ENCODE measurements at regions of chr2 and their contacts with region 1.

Region 1: DNA sequence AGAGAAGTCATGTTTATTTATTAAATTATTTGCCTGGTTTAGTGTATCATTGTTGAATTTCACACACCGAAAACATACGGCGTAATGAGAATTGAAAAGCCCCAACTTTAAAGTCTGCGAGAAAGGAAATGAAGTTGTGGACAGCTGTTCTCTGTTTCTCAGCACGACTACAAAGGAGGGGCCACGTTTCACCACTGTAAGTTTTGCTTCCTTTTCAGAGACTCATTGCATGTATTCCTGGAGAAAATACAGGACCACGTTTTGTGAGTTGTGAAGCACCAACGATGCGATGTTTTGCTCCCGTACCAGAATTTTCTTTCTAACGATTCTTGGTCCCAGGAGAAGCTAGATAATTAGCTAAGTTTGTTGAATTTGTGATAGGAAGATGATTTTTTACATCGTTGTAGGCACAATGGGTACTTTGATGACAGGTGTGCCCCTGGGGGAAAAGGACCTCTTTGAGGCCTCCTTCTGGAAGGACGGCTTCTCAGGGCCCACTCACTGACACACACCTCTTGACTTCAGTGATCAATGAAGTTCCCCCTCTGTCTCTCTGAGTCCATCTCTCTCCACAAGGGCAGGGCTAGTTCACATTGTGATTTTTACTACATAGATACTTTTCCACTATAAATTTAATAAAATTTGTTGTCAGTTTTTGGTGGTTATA is 23.7 kb upstream of the ACKR3 start:
- DNase-seq: peak; percentile 89
- ATAC-seq: peak; percentile 75
- H3K4me3 ChIP-seq: no peak overlapping the region; the same call in 1 of the 2 replicates
- H3K27ac ChIP-seq: peak overlapping the region; percentile 89
- H3K4me1 ChIP-seq: peaks cover 54% of the 10 kb centered on the region
- H3K27me3 ChIP-seq: no peaks in the 10 kb centered on the region
- CTCF ChIP-seq: no peak
- EP300 ChIP-seq: peak in 1 of 2 experiments; percentile 7; a peak in 2 of 4 replicates
- POLR2A ChIP-seq: no peak
- RAD21 ChIP-seq: peak; percentile 13; the same call in 1 of the 2 replicates

Region 2: DNA sequence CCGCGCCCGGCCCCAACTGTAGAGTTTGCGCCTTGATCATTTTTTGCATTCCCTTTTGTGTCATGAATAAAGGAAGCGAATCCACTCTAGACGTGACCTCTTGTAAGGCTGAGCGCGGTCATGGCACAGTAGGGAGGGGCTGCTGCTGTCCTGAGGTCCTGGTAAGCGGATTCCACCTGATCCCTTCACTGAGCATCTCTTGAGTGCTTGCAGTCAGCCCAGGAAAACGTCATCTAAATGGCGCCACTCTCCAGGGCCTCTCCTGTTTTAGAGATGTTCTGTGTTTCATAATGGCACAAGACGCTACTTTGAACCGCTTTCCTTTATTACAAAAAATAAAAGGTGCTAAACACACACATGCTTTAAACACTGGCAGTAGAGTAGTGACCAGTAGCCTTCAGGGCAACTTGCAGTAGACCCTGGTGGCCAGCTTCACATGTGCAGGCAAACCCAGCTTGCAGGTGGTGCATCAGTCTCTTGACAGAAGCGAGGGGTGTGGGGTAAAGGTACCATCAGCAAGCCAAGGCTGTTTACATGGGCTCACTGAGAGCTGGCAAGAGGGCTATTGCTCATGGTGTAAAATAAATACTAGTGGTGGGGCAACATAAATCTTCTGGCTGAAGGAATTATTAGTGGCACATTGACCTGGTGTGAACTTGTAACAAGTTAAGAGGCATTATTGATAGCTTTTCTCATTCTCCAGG is 19.3 kb before region 1 on chr2:
- CTCF ChIA-PET with region 1: interaction called, 10 read pairs
- POLR2A ChIA-PET with region 1: interaction called, 3 read pairs
- RAD21 ChIA-PET with region 1: interaction called, 7 read pairs
- SMC1A ChIA-PET with region 1: interaction called, 27 read pairs
- in situ Hi-C with region 1: no loop called
- intact Hi-C with region 1: no loop called
- DNase-seq: no peak
- ATAC-seq: no peak
- H3K4me3 ChIP-seq: no peak overlapping the region
- H3K27ac ChIP-seq: no peak overlapping the region
- H3K4me1 ChIP-seq: no peaks in the 10 kb centered on the region
- H3K27me3 ChIP-seq: no peaks in the 10 kb centered on the region
- CTCF ChIP-seq: no peak
- EP300 ChIP-seq: no peak
- POLR2A ChIP-seq: no peak
- RAD21 ChIP-seq: no peak

Region 3: DNA sequence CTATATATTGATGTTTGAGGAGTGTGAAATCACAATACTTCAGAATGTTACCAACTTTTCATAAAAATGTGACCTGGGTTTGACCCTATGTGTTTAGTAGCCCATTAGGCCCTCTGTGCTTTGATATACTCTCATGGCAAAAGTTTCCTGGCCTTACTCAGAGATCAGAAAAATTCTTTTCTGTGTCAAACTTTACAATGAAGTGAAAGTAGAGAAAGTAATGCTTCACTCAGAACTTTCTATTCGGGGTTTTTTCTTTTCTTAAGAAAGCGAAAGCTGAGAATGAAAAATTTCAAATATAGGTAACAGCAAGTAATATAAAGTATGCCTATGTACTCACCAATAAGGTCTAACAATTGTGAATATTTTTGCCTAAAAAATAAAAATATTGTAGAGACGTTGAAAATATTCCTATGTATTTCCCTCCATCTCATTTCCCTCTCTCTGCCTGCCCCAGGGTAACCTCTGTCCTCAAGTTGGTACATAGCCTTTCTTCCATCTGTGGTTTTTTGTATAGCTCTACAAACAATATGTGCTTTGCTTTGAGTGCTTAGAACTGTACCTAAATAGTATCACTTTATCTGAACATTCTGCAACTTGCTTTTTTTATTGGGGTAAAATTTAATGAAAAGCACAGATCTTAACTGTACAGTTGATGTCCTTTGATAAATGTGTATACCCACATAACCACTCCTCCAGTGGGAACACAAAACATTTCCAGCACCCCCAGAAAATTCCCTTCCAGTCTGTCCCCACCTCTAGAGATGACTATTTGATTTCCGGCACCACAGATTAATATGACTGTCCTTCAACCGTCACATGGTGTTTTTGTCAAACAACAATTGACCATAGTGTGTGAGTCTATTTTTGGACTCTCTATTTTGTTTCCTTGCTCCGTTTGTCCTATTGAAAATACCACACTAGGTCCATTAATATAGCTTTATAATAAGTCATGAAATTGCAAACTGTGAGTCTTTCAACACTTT is 13.3 kb after region 1 on chr2:
- CTCF ChIA-PET with region 1: interaction called, 5 read pairs
- POLR2A ChIA-PET with region 1: interaction called, 17 read pairs
- RAD21 ChIA-PET with region 1: interaction called, 17 read pairs
- SMC1A ChIA-PET with region 1: interaction called, 24 read pairs
- in situ Hi-C with region 1: no loop called
- intact Hi-C with region 1: loop called (anchors 1 kb)
- DNase-seq: no peak
- ATAC-seq: peak; percentile 86
- H3K4me3 ChIP-seq: no peak overlapping the region
- H3K27ac ChIP-seq: peak overlapping the region; percentile 74
- H3K4me1 ChIP-seq: peaks cover 29% of the 10 kb centered on the region
- H3K27me3 ChIP-seq: no peaks in the 10 kb centered on the region
- CTCF ChIP-seq: no peak
- EP300 ChIP-seq: peak; percentile 81 to 85; a peak in 3 of 4 replicates
- POLR2A ChIP-seq: no peak
- RAD21 ChIP-seq: 0 out of 2 replicates have a peak, but pooled peaks have one; percentile 6

Measured in GM12878 (cell line).